ENCODE measurements at regions of chr16 and their contacts with region 1.

Region 1: GRCh38 chr16:48623304-48624016 is 13.5 kb upstream of the N4BP1 start:
- DNase-seq: peak; percentile 82 to 93 (median 87)
- ATAC-seq: peak; percentile 92 to 97 (median 94)
- H3K4me3 ChIP-seq: peak overlapping the region; percentile 6 to 65 (median 52)
- H3K27ac ChIP-seq: peak overlapping the region in 11 of 12 donors; percentile 9 to 86 (median 60)
- H3K4me1 ChIP-seq: peaks cover 0 to 54% (median 23%) of the 10 kb centered on the region in 12 donors
- H3K27me3 ChIP-seq: no peaks in the 10 kb centered on the region
- CTCF ChIP-seq: peak; percentile 95 to 100 (median 99)
- POLR2A ChIP-seq: no peak

Region 2: DNA sequence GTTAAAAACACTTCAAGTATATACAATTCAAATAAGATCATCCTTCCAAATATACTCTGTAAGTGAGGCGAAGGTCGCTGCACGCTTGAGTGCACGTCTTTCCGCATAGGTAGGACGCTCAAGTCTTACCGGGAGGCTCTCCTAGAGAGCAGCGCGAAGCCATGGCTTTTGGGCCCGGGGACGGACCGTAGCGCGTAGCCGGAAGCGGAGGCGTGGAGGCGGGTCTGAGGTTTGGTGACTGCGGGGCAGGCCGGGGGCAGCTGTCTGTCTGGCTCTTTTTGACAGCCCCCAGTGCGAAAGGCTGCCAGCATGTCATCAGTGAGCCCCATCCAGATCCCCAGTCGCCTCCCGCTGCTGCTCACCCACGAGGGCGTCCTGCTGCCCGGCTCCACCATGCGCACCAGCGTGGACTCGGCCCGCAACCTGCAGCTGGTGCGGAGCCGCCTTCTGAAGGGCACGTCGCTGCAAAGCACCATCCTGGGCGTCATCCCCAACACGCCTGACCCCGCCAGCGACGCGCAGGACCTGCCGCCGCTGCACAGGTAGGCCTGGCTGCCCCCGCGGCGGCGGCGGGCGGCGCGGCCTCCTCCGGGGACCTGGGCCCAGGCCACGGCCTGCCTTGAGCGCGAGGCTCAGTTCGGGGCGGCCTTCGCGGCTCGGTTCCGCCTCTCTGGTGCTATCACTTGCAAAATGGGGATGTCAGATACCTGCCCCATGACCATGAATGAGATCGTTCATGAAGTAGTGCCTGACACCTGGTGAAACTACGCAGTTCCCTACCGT is 379.2 kb before region 1 on chr16 and contains the start of gene LONP2:
- intact Hi-C with region 1: loop called in 6 of 10 experiments (anchors 10 kb)
- DNase-seq: peak; percentile 91 to 95 (median 93)
- ATAC-seq: peak; percentile 97 to 100 (median 100)
- H3K4me3 ChIP-seq: peak within 1 kb of the TSS; percentile 70 to 99 (median 90)
- H3K27ac ChIP-seq: peak within 1 kb of the TSS; percentile 54 to 90 (median 88)
- H3K4me1 ChIP-seq: peaks cover 11 to 42% (median 31%) of the 10 kb centered on the region in 12 donors
- H3K27me3 ChIP-seq: no peaks in the 10 kb centered on the region
- CTCF ChIP-seq: no peak
- POLR2A ChIP-seq: peak in 1 of 2 donors; percentile 74
- total RNA-seq, gene LONP2: 42.8 to 87.4 (median 69.3) TPM

Region 3: DNA sequence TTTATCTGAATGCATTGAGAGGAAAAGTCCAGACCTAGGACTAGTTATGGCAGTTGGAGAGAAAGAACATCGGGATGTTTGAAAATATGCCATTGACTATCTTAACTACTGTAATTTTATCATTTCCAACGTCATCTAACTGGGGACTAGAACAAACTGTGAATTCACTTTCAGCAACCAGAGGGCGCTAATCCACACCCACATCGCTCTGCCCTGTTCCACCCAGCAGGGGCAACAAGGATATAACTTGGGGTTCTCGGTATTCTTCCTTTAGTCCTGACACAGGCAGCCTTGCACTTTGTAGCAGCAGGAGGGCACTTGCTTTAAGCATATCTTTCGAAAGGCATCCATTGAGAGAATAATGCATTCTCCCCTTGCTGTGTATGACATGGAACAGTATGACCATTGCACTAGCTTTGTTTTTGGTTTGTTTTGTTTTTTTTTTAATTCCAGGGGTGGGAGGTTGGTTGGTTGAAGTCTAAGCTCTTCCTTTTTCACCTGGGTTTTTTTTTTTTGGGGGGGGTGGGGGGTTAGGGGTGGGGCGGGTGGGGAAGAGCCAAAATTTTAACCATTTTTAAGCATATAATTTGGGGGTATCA is 269.8 kb before region 1 on chr16:
- intact Hi-C with region 1: loop called (anchors 2 to 5 kb)
- DNase-seq: peak in 3 of 5 donors; percentile 49 to 62 (median 53)
- ATAC-seq: peak; percentile 66 to 86 (median 83)
- H3K4me3 ChIP-seq: no peak overlapping the region
- H3K27ac ChIP-seq: peak overlapping the region in 2 of 12 donors; percentile 34 to 42
- H3K4me1 ChIP-seq: peaks cover 0 to 26% (median 8%) of the 10 kb centered on the region in 12 donors
- H3K27me3 ChIP-seq: no peaks in the 10 kb centered on the region
- CTCF ChIP-seq: peak; percentile 78 to 91 (median 83)
- POLR2A ChIP-seq: no peak

Region 4: DNA sequence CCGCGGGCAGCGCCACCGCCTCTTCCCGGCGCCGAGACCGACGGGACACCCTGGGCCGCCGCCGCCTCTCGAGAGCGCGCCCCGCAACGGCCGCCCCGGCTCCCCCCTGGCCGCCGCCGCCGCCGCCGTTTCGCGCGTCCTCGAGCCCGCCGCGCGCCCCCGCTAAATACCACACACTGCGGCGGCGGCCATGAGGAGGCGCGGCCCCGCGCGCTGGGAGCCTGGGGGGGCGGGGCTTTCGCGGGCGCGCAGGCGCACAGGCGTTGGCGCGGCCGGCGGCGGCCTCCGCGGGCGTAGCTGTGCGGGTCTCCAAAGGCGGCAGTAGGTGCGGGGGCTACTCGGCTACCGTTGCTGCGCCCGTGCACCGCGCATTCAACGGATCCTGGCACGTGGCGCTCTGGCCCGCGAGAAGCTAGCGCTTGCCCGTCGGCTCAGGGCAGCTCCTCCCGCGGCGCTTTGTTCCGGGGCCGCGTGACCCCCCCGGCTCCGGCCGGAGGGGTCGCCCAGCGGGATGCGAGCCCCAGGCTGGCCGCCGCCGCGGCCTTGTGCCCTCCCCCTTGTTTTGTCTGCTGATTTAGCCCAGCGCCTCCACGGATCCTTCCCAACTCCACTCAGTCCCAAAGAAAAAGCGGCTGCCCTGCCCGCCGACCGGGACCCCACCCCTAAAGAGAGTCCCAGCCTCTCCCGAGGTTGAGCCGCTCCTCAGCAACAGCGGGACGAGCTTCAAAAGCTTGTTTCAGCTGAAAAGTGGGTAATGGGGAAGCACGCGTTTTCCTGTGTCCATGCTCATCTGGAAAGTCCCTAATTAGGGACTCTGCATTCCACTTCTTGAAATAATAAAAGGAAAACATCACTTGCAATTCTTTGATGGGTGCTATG is 237.9 kb before region 1 on chr16 and contains the start of gene SIAH1:
- intact Hi-C with region 1: loop called in 3 of 10 experiments (anchors 5 to 10 kb)
- DNase-seq: peak; percentile 86 to 93 (median 89)
- ATAC-seq: peak; percentile 79 to 95 (median 93)
- H3K4me3 ChIP-seq: peak within 1 kb of the TSS; percentile 85 to 99 (median 95)
- H3K27ac ChIP-seq: peak within 1 kb of the TSS; percentile 97 to 100 (median 99)
- H3K4me1 ChIP-seq: peaks cover 6 to 50% (median 24%) of the 10 kb centered on the region in 12 donors
- H3K27me3 ChIP-seq: no peaks in the 10 kb centered on the region
- CTCF ChIP-seq: no peak
- POLR2A ChIP-seq: peak; percentile 55 to 87
- total RNA-seq, gene SIAH1: 10.9 to 21.5 (median 15.5) TPM

Region 5: DNA sequence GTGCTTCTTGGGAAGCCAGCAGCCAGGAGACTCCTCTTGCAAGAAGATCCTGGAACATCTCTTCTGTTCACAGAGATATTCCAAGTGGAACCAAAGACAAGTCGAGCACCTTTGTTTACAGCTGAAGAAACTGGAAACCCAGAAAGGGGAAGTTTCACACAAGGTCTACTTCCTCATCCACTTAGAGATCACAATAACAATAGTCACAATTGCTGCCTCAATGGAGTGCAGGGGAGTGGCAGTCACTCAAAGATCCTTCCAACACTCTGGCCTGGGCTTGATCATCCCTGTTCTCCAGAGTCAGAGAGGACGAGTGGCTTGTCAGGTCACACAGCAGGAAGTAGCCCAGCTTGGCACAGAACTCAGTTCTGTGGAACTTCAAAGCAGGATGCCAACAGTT is 191.3 kb before region 1 on chr16:
- intact Hi-C with region 1: no loop called
- DNase-seq: no peak
- ATAC-seq: peak in 3 of 4 donors; percentile 43 to 59 (median 45)
- H3K4me3 ChIP-seq: no peak overlapping the region
- H3K27ac ChIP-seq: peak overlapping the region in 1 of 12 donors; percentile 55
- H3K4me1 ChIP-seq: peaks cover 0 to 40% (median 0%) of the 10 kb centered on the region in 12 donors
- H3K27me3 ChIP-seq: no peaks in the 10 kb centered on the region
- CTCF ChIP-seq: no peak
- POLR2A ChIP-seq: no peak

Region 6: DNA sequence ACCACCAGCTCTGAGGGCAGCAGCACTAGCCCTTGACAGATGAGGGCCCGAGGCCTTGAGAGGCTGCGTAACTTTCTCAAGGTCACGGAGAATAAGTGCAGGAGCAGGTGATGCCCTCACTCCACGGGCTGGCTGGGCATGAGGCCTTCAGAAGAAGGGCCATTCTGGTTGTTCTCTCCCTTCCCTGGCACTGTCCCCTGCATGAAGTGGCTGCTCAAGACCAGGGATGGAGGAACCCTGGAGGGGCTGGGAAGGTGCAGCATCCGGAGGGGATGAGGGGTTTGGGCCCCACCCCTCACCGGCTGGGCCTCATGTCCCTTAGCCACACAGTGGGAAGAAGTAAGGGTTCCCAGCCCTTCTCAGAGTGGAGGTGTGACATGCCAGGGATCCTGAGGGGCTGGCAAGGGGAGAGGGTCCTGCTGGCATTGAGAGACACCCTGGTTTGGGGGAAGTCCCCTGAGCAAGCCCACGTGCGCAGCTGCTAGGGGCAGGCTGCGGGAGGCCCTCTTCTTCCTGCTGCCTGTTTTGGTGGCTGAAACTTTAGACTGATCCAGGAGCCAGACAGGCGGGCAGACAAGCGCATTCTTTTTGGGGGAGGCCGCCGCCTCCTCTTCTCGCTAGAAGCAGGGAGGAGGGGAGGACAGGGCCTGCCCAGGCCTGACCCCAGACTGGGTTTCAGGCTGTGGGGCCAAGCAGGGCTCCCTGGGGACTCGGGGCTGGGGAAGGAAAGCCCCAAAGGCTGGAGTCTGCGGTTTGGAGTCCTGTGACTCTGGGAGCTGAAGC is 87.4 kb before region 1 on chr16:
- intact Hi-C with region 1: loop called in 9 of 10 experiments (anchors 2 to 10 kb)
- DNase-seq: peak; percentile 67 to 89 (median 72)
- ATAC-seq: peak; percentile 30 to 49 (median 40)
- H3K4me3 ChIP-seq: peak overlapping the region in 2 of 12 donors; percentile 1
- H3K27ac ChIP-seq: peak overlapping the region; percentile 38 to 89 (median 66)
- H3K4me1 ChIP-seq: peaks cover 14 to 57% (median 37%) of the 10 kb centered on the region in 12 donors
- H3K27me3 ChIP-seq: no peaks in the 10 kb centered on the region
- CTCF ChIP-seq: no peak
- POLR2A ChIP-seq: no peak

Region 7: GRCh38 chr16:48831076-48831722 is 207.7 kb after region 1 on chr16:
- intact Hi-C with region 1: no loop called
- DNase-seq: no peak
- ATAC-seq: no peak
- H3K4me3 ChIP-seq: no peak overlapping the region
- H3K27ac ChIP-seq: no peak overlapping the region
- H3K4me1 ChIP-seq: no peaks in the 10 kb centered on the region
- H3K27me3 ChIP-seq: peaks cover 0 to 22% (median 0%) of the 10 kb centered on the region in 9 donors
- CTCF ChIP-seq: peak in 6 of 12 donors; percentile 7 to 41 (median 23)
- POLR2A ChIP-seq: no peak